Colonic mucosa (tissue), 4 donors: ENCODE measurements at regions of chr2 and their contacts with region 1.

Region 1: DNA sequence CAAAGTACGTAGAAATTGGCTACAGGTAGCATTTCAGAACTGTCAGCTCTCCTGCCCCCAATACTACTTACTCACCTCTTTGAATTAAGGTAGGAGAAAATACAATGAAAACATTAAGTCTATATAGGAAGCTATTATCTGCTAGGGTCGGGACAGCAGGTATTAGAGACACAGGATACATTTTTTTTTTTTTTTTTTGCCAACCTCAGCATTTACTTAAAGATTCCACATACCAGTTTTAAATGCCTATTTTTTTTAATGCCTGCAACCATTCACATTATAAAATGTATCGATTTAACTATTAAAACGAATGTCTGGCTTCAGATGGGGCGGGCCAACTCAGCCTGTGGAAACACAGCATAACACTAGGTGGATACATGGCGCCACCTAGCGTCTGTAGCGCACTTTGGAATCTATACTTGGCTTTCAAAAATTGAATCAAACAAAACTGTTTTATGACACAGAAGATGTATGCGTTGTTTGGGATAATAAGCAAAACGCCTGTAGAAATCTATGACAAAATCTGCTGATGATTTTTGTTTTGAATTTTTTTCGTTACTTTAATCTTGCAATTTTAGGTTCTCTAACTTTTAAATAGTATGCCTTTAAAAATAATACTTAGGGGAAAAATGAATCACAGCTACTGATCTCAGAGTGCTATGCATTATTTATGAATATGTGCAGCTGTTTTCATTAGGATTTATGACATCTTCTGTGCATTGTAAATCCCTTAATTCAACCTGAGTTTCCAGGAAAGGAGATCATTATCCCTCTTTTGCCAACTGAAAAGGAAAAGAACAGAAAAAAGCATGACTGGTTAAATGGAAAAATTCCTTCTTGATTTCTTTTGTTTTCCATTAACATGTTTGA is 261.0 kb downstream of the NYAP2 start:
- DNase-seq: peak; percentile 76
- H3K4me3 ChIP-seq: no peak overlapping the region
- H3K27ac ChIP-seq: no peak overlapping the region
- H3K4me1 ChIP-seq: no peaks in the 10 kb centered on the region
- H3K27me3 ChIP-seq: no peaks in the 10 kb centered on the region
- CTCF ChIP-seq: peak; percentile 80

Region 2: DNA sequence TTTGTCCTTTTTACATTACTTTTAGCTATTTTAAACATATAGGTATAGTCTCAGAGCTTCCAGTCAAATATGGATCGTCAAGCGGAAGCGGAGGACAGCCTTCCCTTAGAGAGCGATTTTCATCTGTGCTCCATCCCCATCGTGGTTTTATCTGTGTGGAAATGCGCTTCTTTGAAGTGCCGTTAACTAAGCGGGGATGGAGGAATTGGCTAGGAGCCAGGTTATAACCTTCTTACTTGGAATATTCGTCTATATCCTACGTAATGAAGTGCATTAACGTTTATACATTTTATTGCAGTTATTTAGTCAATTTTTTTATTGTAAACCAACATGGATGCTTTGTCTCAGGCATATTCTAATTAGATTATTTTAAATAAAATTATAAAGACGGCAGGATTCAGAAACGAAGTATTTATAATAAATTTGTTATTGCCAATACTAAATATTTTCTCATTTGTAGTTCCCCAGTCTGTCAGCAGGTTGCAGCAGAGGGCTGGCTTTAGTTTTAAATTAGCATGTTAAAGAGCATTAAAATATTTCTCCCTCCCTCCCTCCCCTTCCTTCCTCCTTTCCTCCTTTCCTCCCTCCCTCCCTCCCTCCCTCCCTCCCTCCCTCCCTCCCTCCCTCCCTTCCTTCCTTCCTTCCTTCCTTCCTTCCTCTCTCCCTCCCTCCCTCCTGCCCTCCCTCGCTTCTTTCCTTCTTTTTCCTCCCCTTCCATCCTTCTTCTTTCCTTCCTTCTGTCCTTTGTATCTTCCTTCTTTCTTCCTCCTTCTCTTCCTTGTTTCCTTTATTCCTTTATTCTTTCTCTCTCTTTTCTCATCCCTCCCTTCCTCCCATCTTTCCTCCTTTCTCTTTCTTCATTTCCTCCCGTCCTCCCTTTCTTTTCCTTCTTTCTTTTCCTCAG is 537.7 kb before region 1 on chr2:
- intact Hi-C with region 1: loop called (anchors 2 kb)
- DNase-seq: peak; percentile 25
- H3K4me3 ChIP-seq: no peak overlapping the region
- H3K27ac ChIP-seq: no peak overlapping the region
- H3K4me1 ChIP-seq: no peaks in the 10 kb centered on the region
- H3K27me3 ChIP-seq: no peaks in the 10 kb centered on the region
- CTCF ChIP-seq: peak; percentile 39

Region 3: GRCh38 chr2:225282858-225283710 is 377.4 kb before region 1 on chr2:
- intact Hi-C with region 1: loop called (anchors 2 kb)
- DNase-seq: peak; percentile 22
- H3K4me3 ChIP-seq: no peak overlapping the region
- H3K27ac ChIP-seq: no peak overlapping the region
- H3K4me1 ChIP-seq: no peaks in the 10 kb centered on the region
- H3K27me3 ChIP-seq: no peaks in the 10 kb centered on the region
- CTCF ChIP-seq: peak; percentile 54

Region 4: GRCh38 chr2:226023383-226023782 is 362.9 kb after region 1 on chr2:
- intact Hi-C with region 1: no loop called
- DNase-seq: no peak
- H3K4me3 ChIP-seq: no peak overlapping the region
- H3K27ac ChIP-seq: no peak overlapping the region
- H3K4me1 ChIP-seq: no peaks in the 10 kb centered on the region
- H3K27me3 ChIP-seq: no peaks in the 10 kb centered on the region
- CTCF ChIP-seq: no peak